Common myeloid progenitor, CD34-positive (primary cell): ENCODE measurements at regions of chr7 and their contacts with region 1.

Region 1: DNA sequence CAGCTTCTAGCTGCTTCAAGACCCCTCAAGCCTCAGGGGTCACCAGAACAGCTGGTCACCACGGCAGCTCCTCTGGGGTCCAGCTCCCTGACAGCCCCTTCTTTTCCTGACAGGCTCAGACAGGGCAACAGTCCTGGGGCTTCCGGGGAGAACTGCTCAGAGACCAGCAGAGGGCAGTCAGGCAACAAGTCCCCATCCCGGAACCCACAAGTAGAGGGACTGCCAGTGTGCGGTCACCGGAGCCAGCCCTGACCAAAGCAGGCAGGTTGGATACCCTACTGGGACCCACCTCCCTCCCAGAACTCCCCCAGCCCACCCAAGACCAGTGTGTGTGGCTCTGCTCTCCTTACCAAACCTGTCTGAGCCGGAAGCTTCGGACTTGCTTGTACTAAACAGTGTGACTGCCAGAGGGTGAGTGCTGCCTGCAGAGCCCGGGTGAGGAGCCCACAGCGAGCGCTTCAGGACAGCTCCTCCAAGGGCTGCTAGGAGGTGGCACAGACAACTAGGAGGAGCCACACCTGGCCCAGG is 40.3 kb downstream of the YKT6 start:
- DNase-seq: peak; percentile 67 to 78 (median 75)
- H3K4me3 ChIP-seq: peak overlapping the region in 2 of 7 experiments; percentile 40 to 61
- H3K27ac ChIP-seq: no peak overlapping the region
- H3K4me1 ChIP-seq: peaks cover 0 to 4% (median 1%) of the 10 kb centered on the region in 4 experiments
- H3K27me3 ChIP-seq: no peaks in the 10 kb centered on the region

Region 2: DNA sequence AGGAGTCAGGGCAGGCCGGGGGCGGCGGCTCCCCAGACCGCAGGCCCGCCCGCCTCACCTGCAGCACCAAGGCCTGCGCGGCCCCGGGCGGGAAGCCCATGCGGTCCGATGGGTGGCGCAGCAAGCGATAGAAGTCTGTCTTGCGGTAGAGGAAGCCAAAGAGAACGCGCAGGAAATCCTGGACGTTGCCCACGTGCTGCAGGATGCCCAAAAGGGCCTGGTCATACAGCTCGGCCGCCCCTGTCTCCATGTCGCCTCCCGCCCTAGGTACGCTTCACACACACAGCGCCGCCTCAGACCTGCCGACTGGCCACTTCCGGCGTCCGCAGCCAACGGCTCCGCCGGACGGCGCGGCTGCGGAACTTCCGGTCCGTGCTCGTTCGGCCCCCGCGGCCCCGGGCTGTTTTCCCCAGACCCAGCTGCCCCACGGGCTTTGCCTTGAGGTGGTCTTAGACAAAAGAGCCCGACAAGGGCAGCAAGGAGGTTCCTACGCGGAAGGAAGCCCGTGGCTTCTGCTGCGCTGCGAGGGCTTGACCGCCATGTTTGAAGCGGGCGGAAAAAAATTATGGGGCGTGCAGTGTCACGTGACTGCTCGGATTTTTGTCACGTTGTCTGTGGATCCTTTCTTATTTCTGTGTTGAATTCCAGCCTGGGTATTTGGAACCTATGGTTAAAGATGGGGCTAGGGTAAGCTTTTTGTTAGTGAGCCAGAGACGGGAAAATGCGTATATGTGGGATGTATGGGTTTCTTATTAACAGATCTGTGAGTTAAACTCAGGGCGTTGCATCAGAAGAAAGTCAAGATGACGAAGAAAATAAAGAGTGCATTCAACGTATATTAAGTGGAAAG is 249.5 kb after region 1 on chr7 and contains the start of gene NUDCD3:
- CTCF ChIA-PET with region 1: interaction called, 10 read pairs
- POLR2A ChIA-PET with region 1: no interaction called
- DNase-seq: peak; percentile 86 to 92 (median 91)
- H3K4me3 ChIP-seq: peak within 1 kb of the TSS; percentile 79 to 98 (median 88)
- H3K27ac ChIP-seq: peak within 1 kb of the TSS; percentile 90 to 97
- H3K4me1 ChIP-seq: peaks cover 12 to 28% (median 17%) of the 10 kb centered on the region in 4 experiments
- H3K27me3 ChIP-seq: peaks cover 0 to 2% (median 0%) of the 10 kb centered on the region in 5 experiments

Region 3: GRCh38 chr7:44565097-44565794 is 324.2 kb after region 1 on chr7:
- CTCF ChIA-PET with region 1: interaction called, 13 read pairs
- POLR2A ChIA-PET with region 1: no interaction called
- DNase-seq: peak; percentile 43 to 64 (median 54)
- H3K4me3 ChIP-seq: no peak overlapping the region
- H3K27ac ChIP-seq: peak overlapping the region in 1 of 2 experiments; percentile 58
- H3K4me1 ChIP-seq: peaks cover 0 to 9% (median 0%) of the 10 kb centered on the region in 4 experiments
- H3K27me3 ChIP-seq: no peaks in the 10 kb centered on the region